ENCODE measurements at regions of chr2 and their contacts with region 1.

Region 1: GRCh38 chr2:47174733-47175361 is 19.7 kb upstream of the STPG4 start:
- DNase-seq: peak; percentile 76
- H3K4me3 Mint-ChIP-seq: peak overlapping the region; percentile 100
- H3K27ac Mint-ChIP-seq: peak overlapping the region; percentile 99
- H3K4me1 Mint-ChIP-seq: peaks cover 36% of the 10 kb centered on the region
- H3K27me3 Mint-ChIP-seq: no peaks in the 10 kb centered on the region
- CTCF ChIP-seq: no peak

Region 2: DNA sequence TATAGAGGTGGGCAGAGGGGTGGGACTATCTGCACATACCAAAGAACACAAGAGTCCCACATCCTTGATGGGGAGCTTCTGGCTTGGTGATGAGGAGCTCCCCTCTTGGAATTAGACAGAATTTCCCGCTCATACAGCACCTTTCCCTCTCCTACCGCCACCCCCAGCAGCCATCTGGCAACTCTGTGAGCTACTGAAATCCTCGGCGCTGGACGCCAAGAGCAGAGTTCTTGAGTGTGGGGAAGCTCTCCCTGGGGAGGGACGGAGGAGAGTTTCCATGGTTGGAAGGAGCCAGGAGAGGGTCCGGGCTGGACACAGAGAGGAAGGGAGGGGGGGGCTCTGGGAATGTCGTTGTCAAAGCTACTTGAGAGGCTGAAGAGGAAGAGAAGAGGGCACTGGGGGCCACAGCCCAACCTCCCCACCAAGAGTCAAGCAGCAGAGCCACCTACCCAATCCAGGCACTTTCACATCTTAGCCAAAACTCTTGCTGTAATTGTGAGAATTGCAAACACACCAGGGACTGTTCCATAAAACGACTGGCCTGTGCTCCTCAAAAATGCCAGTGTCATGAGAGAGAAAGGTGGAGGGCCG is 169.8 kb before region 1 on chr2:
- CTCF ChIA-PET with region 1: no interaction called
- intact Hi-C with region 1: no loop called
- DNase-seq: no peak
- H3K4me3 Mint-ChIP-seq: no peak overlapping the region
- H3K27ac Mint-ChIP-seq: no peak overlapping the region
- H3K4me1 Mint-ChIP-seq: peaks cover 27% of the 10 kb centered on the region
- H3K27me3 Mint-ChIP-seq: no peaks in the 10 kb centered on the region
- CTCF ChIP-seq: no peak

Region 3: GRCh38 chr2:47016172-47016913 is 158.5 kb before region 1 on chr2:
- CTCF ChIA-PET with region 1: interaction called, 8 read pairs
- intact Hi-C with region 1: loop called (anchors 5 kb)
- DNase-seq: peak; percentile 81
- H3K4me3 Mint-ChIP-seq: peak overlapping the region; percentile 11
- H3K27ac Mint-ChIP-seq: peak overlapping the region; percentile 51
- H3K4me1 Mint-ChIP-seq: peaks cover 27% of the 10 kb centered on the region
- H3K27me3 Mint-ChIP-seq: no peaks in the 10 kb centered on the region
- CTCF ChIP-seq: no peak

Region 4: DNA sequence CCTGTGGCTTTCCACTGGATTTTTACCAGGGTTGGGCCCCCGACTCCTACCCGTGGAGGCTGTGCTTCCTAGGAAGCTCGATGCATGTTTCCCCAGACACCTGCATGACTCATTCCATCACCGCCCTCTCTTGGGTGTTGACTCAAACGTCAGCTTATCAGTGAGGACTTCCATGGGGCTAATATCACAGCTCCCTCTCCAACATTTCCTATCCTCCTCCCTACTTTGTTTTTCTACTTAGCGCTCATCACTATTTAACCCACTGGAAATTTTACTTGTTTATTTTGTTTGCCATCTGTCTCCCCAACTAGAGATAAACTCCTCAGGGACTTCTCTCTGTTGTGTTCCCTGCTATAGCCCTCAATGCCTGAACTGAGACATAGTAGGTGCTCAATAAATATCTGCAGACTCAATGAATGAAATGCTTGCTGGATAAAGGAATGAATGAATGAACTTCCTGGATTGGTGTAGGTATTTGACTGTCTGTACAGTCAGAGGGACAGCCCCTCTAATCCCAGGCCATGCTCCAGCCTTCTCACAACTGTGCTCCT is 138.4 kb after region 1 on chr2:
- CTCF ChIA-PET with region 1: interaction called, 10 read pairs
- intact Hi-C with region 1: no loop called
- DNase-seq: peak; percentile 73
- H3K4me3 Mint-ChIP-seq: no peak overlapping the region
- H3K27ac Mint-ChIP-seq: peak overlapping the region; percentile 66
- H3K4me1 Mint-ChIP-seq: peaks cover 48% of the 10 kb centered on the region
- H3K27me3 Mint-ChIP-seq: no peaks in the 10 kb centered on the region
- CTCF ChIP-seq: no peak

Region 5: DNA sequence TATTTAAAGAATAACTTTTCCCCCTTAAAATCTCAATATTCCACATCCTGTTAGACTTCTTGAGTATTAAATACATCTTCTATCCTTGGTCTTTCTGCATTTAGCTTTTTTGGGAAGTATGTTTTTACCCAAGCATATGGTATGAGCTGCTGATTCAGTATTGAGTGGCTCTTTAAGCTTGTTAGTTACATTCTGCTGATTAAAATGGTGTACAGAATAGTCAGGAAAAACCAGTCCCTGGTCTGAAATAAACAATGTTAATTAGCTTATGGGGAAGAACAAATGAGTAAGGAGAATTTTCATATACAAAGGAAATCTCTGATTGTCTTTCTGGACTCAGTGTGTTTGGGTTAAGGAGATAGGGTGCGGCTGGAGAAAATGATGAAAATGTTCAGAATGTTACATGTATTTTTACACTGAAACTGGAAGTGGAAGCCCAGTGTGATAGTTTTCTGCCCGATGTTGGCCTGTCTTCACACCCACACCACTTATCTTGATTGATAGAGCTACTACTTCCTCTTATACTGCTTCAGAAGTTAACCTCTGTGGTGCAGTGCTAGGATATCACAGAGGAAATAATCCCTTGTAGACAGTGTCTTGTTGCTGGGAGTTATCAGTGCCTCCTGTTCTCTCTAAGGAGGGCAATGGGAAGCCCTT is 312.1 kb after region 1 on chr2:
- CTCF ChIA-PET with region 1: no interaction called
- intact Hi-C with region 1: no loop called
- DNase-seq: no peak
- H3K4me3 Mint-ChIP-seq: no peak overlapping the region
- H3K27ac Mint-ChIP-seq: no peak overlapping the region
- H3K4me1 Mint-ChIP-seq: peaks cover 15% of the 10 kb centered on the region
- H3K27me3 Mint-ChIP-seq: no peaks in the 10 kb centered on the region
- CTCF ChIP-seq: no peak